Breast epithelium (tissue), 4 donors: ENCODE measurements at regions of chr17 and their contacts with region 1.

Region 1: GRCh38 chr17:43416998-43417891 is 18.5 kb downstream of the ARL4D start:
- DNase-seq: peak; percentile 59 to 62
- H3K4me3 ChIP-seq: peak overlapping the region in 1 of 3 donors; percentile 15
- H3K27ac ChIP-seq: peak overlapping the region; percentile 69 to 71
- H3K4me1 ChIP-seq: peaks cover 4 to 12% of the 10 kb centered on the region in 2 donors
- H3K27me3 ChIP-seq: no peaks in the 10 kb centered on the region
- CTCF ChIP-seq: no peak
- POLR2A ChIP-seq: no peak

Region 2: GRCh38 chr17:43398724-43399595 is 18.3 kb before region 1 on chr17 and contains the start of gene ARL4D:
- intact Hi-C with region 1: no loop called
- DNase-seq: peak; percentile 79 to 80
- H3K4me3 ChIP-seq: peak within 1 kb of the TSS; percentile 73 to 97 (median 91)
- H3K27ac ChIP-seq: peak within 1 kb of the TSS; percentile 83 to 89
- H3K4me1 ChIP-seq: peaks cover 0 to 5% of the 10 kb centered on the region in 2 donors
- H3K27me3 ChIP-seq: no peaks in the 10 kb centered on the region
- CTCF ChIP-seq: no peak
- POLR2A ChIP-seq: peak; percentile 69
- total RNA-seq, gene ARL4D: 6.1 to 15.4 (median 7.2) TPM

Region 3: DNA sequence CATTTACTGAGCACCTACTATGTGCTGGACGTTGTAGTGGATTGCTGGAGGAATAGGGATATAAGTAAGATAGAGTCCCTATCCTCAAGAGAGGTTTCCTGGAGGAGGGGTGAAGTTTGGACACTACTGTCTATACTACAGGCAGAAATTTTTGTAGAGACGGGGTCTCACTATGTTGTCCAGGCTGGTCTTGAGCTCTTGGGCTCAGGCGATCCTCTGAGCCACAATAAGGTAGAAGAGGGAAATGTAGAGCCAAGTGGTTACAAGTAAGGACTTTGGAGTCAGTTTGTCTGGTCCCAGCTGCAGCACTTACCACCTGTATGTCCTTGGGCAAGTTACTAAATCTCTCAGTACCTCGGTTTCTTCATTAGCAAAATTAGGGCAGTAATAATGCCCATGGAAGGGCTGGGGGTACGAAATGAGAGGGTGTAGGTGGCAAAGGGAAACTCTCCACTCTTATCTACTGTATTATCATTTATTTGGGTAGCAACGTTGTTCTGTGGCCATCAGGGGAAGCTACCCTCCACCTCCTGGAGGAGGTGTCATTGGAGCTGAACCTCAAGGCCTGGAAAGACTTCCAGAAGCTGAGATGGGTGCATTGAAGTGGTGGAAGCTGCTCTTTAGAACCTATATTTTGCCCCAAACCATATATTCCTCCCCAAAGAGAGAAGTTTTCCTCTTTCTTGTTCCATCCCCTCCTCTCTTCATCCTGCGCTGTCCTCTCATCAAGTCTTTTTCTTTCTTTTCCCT is 31.6 kb after region 1 on chr17:
- intact Hi-C with region 1: loop called (anchors 1 kb)
- DNase-seq: no peak
- H3K4me3 ChIP-seq: no peak overlapping the region
- H3K27ac ChIP-seq: peak overlapping the region; percentile 40 to 71
- H3K4me1 ChIP-seq: no peaks in the 10 kb centered on the region
- H3K27me3 ChIP-seq: no peaks in the 10 kb centered on the region
- CTCF ChIP-seq: no peak
- POLR2A ChIP-seq: no peak